T-cell (primary cell): ENCODE measurements at regions of chr2 and their contacts with region 1.

Region 1: GRCh38 chr2:235378261-235378660 is 115.6 kb upstream of the AGAP1 start:
- DNase-seq: no peak
- ATAC-seq: no peak
- H3K4me3 ChIP-seq: no peak overlapping the region
- H3K4me3 Mint-ChIP-seq: no peak overlapping the region
- H3K27ac ChIP-seq: no peak overlapping the region
- H3K27ac Mint-ChIP-seq: no peak overlapping the region
- H3K4me1 ChIP-seq: no peaks in the 10 kb centered on the region
- H3K4me1 Mint-ChIP-seq: no peaks in the 10 kb centered on the region
- H3K27me3 ChIP-seq: peaks cover 0 to 15% of the 10 kb centered on the region in 2 experiments
- H3K27me3 Mint-ChIP-seq: peaks cover 10 to 24% of the 10 kb centered on the region in 2 donors

Region 2: DNA sequence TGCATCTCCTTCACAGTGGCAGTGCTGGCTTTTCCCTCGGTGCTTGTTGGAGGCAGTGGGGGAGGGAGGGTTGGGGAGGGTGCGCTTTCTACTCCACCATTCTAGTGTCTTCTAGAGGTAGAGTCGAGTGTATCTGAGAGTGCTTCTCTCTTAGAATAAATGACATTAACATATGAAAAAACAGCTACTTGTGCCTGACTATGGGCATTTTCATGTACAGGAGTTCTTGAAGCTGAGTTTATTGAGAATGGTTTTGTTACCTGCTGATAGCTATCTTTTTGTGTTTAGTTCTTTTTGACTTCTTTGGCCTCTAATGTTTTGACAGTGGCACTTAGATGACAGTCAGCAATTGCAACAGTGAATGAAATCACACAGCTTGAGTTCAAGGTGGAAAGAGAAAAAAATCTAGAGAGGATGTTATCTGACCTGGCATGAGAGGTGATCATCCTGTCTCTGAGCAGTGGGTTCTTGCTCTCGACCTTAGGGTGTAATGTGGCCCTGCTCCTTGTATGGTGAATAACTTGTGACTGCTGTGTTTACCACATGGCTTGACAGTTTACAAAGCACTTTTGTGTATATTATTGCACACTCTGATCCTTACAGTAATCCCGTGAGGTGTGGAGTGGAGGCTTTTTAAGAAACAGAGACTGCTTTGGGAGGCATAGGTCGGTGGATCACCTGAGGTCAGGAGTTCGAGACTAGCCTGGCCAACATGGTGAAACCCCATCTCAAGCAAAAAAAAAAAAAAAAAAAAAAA is 202.3 kb after region 1 on chr2:
- CTCF ChIA-PET with region 1: no interaction called
- POLR2A ChIA-PET with region 1: interaction called in 1 of 2 experiments, 13 read pairs
- DNase-seq: no peak
- ATAC-seq: no peak
- H3K4me3 ChIP-seq: no peak overlapping the region
- H3K4me3 Mint-ChIP-seq: no peak overlapping the region
- H3K27ac ChIP-seq: no peak overlapping the region
- H3K27ac Mint-ChIP-seq: no peak overlapping the region
- H3K4me1 ChIP-seq: no peaks in the 10 kb centered on the region
- H3K4me1 Mint-ChIP-seq: no peaks in the 10 kb centered on the region
- H3K27me3 ChIP-seq: peaks cover 0 to 9% of the 10 kb centered on the region in 2 experiments
- H3K27me3 Mint-ChIP-seq: no peaks in the 10 kb centered on the region